ENCODE measurements at regions of chr1 and their contacts with region 1.

Region 1: GRCh38 chr1:221217029-221217428 is 337.8 kb downstream of the HLX start:
- DNase-seq: peak; percentile 53
- ATAC-seq: peak; percentile 87
- H3K4me3 ChIP-seq: no peak overlapping the region
- H3K27ac ChIP-seq: peak overlapping the region; percentile 4; the same call in 1 of the 2 replicates
- H3K4me1 ChIP-seq: peaks cover 15% of the 10 kb centered on the region
- H3K27me3 ChIP-seq: no peaks in the 10 kb centered on the region
- CTCF ChIP-seq: no peak

Region 2: GRCh38 chr1:221263831-221264767 is 47.1 kb after region 1 on chr1:
- CTCF ChIA-PET with region 1: no interaction called
- POLR2A ChIA-PET with region 1: no interaction called
- intact Hi-C with region 1: loop called (anchors 5 kb)
- DNase-seq: peak; percentile 84
- ATAC-seq: peak; percentile 87
- H3K4me3 ChIP-seq: no peak overlapping the region
- H3K27ac ChIP-seq: no peak overlapping the region
- H3K4me1 ChIP-seq: no peaks in the 10 kb centered on the region
- H3K27me3 ChIP-seq: no peaks in the 10 kb centered on the region
- CTCF ChIP-seq: peak; percentile 84

Measured in PC-3 (cell line).